PC-3 (cell line): ENCODE measurements at regions of chr17 and their contacts with region 1.

Region 1: DNA sequence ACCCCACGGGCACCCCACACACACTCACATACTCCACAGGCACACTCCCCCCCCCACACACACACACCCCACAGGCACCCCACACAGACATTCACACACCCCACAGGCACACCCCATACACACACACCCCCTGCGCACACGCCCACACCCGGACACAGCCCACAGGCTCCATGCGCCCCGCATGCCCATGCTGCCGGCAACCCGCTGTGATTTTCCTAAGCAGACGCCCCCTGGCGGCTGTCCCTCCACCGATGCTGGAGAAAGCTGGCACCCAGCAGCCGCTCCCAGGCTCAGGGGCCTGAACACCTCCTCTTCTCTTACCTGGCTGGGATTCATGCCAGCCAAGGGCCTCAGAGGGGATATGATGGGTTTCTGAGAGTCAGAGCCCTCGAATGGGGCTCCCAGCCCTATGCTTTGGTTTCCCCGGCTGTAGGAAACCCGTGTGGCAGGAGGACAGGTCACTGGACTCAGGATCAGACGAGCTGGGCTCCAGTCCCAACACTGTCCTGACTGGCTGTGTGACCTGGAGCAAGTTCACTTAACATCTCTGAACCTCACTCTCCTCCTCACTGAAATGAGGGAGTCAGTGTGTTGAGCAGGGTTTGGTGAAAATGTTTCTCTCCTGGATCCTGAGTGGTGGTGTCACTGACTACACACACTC is 19.6 kb upstream of the TNFRSF13B start:
- DNase-seq: peak; percentile 89
- ATAC-seq: peak; percentile 84
- H3K4me3 ChIP-seq: no peak overlapping the region
- H3K27ac ChIP-seq: no peak overlapping the region
- H3K4me1 ChIP-seq: peaks cover 3% of the 10 kb centered on the region; the same call in 1 of the 2 replicates
- H3K27me3 ChIP-seq: no peaks in the 10 kb centered on the region
- CTCF ChIP-seq: peak; percentile 97

Region 2: DNA sequence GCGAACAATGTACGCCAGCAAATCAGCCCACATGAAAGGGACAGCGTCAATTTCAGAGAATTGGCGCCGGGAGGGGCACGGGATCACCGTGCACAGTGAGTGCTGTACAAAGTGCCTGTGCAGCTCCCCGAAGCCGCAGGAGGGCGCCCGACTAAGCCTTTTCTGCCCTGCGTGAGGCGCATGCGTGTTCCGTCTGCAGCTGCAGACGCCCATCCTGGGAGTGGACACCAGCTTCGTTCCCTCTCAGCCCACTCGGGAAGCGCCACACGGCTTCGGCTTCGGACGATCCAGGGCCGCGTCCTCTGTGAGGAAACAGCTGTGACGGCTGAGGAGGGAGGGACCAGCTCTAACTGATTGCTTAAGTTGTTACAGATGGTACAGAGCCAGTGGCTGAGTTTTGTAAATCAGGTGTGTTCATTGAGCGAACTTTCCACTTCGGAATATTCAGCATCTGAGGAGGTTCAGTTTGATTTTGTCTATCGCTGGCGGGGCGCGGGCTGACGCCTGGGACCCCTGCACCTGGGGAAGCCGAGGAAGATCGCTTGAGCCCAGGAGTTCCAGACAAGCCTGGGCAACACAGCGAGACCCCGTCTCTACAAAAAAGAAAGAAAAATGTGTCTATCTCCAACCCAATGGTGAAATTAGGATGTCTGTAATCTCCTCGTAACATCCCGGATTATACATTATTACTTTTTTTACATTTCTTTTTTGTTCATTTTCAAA is 407.0 kb before region 1 on chr17:
- CTCF ChIA-PET with region 1: interaction called, 6 read pairs
- POLR2A ChIA-PET with region 1: no interaction called
- intact Hi-C with region 1: loop called (anchors 5 kb)
- DNase-seq: peak; percentile 97
- ATAC-seq: peak; percentile 99
- H3K4me3 ChIP-seq: peak overlapping the region; percentile 62
- H3K27ac ChIP-seq: no peak overlapping the region
- H3K4me1 ChIP-seq: peaks cover 7% of the 10 kb centered on the region; the same call in 1 of the 2 replicates
- H3K27me3 ChIP-seq: no peaks in the 10 kb centered on the region
- CTCF ChIP-seq: peak; percentile 96

Region 3: GRCh38 chr17:16886655-16887322 is 104.7 kb before region 1 on chr17:
- CTCF ChIA-PET with region 1: no interaction called
- POLR2A ChIA-PET with region 1: no interaction called
- intact Hi-C with region 1: no loop called
- DNase-seq: no peak
- ATAC-seq: no peak
- H3K4me3 ChIP-seq: no peak overlapping the region
- H3K27ac ChIP-seq: no peak overlapping the region
- H3K4me1 ChIP-seq: no peaks in the 10 kb centered on the region
- H3K27me3 ChIP-seq: no peaks in the 10 kb centered on the region
- CTCF ChIP-seq: no peak

Region 4: GRCh38 chr17:16922386-16923104 is 68.9 kb before region 1 on chr17:
- CTCF ChIA-PET with region 1: no interaction called
- POLR2A ChIA-PET with region 1: no interaction called
- intact Hi-C with region 1: loop called (anchors 1 kb)
- DNase-seq: peak; percentile 53
- ATAC-seq: peak; percentile 39; the same call in 1 of the 2 replicates
- H3K4me3 ChIP-seq: no peak overlapping the region
- H3K27ac ChIP-seq: no peak overlapping the region
- H3K4me1 ChIP-seq: peaks cover 11% of the 10 kb centered on the region
- H3K27me3 ChIP-seq: no peaks in the 10 kb centered on the region
- CTCF ChIP-seq: peak; percentile 63

Region 5: GRCh38 chr17:17028059-17028877 is 36.8 kb after region 1 on chr17:
- CTCF ChIA-PET with region 1: no interaction called
- POLR2A ChIA-PET with region 1: no interaction called
- intact Hi-C with region 1: no loop called
- DNase-seq: peak; percentile 100
- ATAC-seq: peak; percentile 92
- H3K4me3 ChIP-seq: no peak overlapping the region
- H3K27ac ChIP-seq: peak overlapping the region; percentile 93
- H3K4me1 ChIP-seq: peaks cover 47% of the 10 kb centered on the region
- H3K27me3 ChIP-seq: no peaks in the 10 kb centered on the region
- CTCF ChIP-seq: no peak; the same call in 1 of the 2 replicates